ENCODE measurements at regions of chr10 and their contacts with region 1.

Region 1: DNA sequence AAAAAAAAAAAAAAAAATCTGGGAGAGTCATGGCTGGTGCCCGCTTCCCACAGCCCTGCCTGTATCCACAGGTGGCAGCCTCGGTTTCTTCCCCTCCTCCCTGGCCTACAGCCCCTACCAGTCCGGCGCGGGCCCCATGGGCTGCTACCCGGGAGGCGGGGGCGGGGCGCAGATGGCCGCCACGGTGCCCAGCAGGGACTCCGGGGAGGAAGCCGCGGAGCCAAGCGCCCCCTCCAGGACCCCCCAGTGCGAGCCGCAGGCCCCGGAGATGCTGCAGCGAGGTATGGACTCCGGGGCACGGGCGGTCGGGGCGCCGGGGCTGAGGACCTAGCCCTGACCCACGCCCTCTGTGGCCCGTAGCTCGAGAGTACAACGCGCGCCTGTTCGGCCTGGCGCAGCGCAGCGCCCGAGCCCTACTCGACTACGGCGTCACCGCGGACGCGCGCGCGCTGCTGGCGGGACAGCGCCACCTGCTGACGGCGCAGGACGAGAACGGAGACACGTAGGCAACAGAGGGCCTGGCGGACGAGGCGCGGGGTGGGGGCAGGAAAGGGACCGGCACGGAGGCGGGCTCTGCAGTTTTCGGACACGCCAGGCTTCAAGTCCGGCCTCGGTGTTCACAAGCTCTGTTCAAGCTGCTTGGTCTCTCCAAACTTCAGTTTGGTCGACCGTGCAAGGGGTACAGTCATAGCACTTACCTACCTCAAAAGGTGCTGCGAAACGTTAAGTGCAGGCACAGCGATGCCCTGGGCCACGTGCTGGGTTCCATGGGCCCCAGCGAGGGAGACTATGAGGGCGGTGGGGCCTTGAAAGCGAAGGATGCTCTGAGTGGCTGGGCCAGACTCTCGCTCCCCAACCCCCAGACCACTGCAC is 3.9 kb downstream of the NFKB2 start:
- DNase-seq: peak; percentile 93 to 97
- ATAC-seq: peak; percentile 88
- H3K4me3 ChIP-seq: peak overlapping the region in 1 of 2 donors; percentile 39
- H3K27ac ChIP-seq: no peak overlapping the region
- H3K4me1 ChIP-seq: no peaks in the 10 kb centered on the region
- H3K27me3 ChIP-seq: no peaks in the 10 kb centered on the region

Region 2: DNA sequence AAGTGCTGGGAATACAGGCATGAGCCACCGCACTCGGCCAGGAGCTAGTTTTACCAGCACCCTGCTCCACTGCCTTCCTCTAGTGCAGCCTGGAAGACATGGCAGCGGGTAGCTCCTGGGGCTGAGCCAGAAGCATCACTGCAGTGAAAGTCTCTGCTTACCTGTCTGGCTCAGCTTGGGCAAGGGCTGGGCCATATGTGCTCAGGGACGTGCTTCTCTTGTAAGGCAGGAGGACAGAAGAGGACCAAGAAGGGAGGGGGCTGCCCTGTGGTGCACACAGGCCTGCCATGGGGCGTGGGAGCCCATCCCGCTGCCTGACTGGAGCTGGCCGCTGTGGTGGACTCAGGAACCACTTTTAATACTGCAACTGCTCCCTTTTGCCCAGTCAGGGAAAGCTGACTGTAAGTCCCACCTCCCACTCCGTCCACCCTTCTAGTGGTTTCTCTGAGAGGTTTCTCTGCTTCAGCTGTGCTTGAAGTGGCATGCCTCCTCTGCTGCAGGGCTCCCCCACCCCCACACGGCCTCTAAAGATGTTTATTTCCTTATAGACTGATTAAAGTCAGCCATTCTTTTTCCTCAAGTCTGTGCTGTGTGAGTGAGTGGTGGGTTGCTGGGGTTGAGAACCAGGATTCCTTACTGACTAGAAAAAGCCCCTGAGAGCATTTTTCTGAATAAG is 77.2 kb after region 1 on chr10:
- intact Hi-C with region 1: loop called in 1 of 2 experiments (anchors 5 kb)
- DNase-seq: peak in 1 of 2 donors; percentile 36
- ATAC-seq: no peak
- H3K4me3 ChIP-seq: no peak overlapping the region
- H3K27ac ChIP-seq: no peak overlapping the region
- H3K4me1 ChIP-seq: no peaks in the 10 kb centered on the region
- H3K27me3 ChIP-seq: no peaks in the 10 kb centered on the region